Gastrocnemius medialis (tissue), 4 donors: ENCODE measurements at regions of chr2 and their contacts with region 1.

Region 1: DNA sequence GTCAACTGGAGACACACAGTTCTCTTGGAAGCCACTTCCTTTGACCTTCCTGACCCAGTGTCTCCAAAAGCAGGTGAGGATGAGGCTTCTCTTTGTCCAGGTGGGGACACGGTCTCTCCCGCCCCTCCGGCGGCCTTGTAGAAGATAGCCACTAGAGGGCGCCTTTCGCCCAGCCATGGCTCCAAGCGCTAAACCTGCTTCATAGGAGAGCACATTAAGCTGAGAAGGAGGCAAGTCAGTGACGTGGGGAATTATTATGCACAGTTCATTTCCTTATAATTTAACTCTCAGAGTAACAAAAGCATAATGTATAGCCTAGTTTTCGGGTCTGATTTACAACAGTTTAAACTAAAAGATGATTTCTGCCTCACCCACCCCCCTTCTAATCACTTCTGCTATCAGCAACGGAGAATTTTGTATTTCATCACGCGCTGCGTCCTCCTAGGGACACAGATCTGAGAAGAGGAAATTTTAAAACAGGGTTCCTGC is 208.7 kb downstream of the ICOS start:
- DNase-seq: peak; percentile 15 to 38
- ATAC-seq: peak; percentile 88 to 89
- H3K4me3 ChIP-seq: peak overlapping the region; percentile 38 to 56 (median 44)
- H3K27ac ChIP-seq: peak overlapping the region in 3 of 4 donors; percentile 19 to 44 (median 33)
- H3K4me1 ChIP-seq: peaks cover 0 to 6% of the 10 kb centered on the region in 2 donors
- H3K27me3 ChIP-seq: no peaks in the 10 kb centered on the region
- CTCF ChIP-seq: peak; percentile 45 to 85 (median 61)
- POLR2A ChIP-seq: no peak

Region 2: DNA sequence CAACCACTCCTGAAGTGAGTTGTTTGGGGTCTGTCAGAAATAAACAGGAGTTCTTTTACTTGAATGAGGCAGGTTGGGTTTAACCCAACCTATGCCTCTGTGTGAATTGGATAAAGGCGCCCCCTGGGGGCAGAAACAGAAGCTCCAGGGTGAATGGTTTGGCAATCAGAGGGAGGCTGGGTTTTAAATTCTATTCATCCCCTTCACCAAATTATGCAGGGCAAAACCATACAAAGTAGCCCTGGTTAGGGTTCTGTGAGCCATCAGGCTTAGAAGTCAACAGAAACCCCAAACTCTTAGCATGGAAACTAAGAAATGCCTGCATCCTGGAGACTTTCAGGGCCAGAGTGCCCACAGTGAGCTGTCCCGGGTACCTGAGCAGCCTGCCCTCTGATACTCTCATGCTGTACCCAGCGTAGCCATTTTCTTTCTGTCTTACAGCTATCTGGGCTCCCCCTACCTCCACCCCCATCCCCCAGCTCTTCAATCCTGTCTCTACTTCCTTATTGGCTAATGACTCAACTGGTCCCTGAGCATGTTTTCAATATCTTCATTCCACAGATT is 32.8 kb after region 1 on chr2:
- in situ Hi-C with region 1: no loop called
- intact Hi-C with region 1: loop called (anchors 1 kb)
- DNase-seq: no peak
- ATAC-seq: no peak
- H3K4me3 ChIP-seq: no peak overlapping the region
- H3K27ac ChIP-seq: no peak overlapping the region
- H3K4me1 ChIP-seq: no peaks in the 10 kb centered on the region
- H3K27me3 ChIP-seq: no peaks in the 10 kb centered on the region
- CTCF ChIP-seq: peak in 3 of 5 experiments; percentile 20 to 56 (median 54)
- POLR2A ChIP-seq: no peak

Region 3: GRCh38 chr2:204561749-204562148 is 416.4 kb after region 1 on chr2:
- in situ Hi-C with region 1: no loop called
- intact Hi-C with region 1: no loop called
- DNase-seq: no peak
- ATAC-seq: no peak
- H3K4me3 ChIP-seq: no peak overlapping the region
- H3K27ac ChIP-seq: no peak overlapping the region
- H3K4me1 ChIP-seq: no peaks in the 10 kb centered on the region
- H3K27me3 ChIP-seq: no peaks in the 10 kb centered on the region
- CTCF ChIP-seq: no peak
- POLR2A ChIP-seq: no peak